Activated CD8-positive, alpha-beta T cell treated with anti-CD3 and anti-CD28 coated beads, Interleukin-2, amount 10 ng/mL, durations not matched to agents 7 days and 5 days (primary cell): ENCODE measurements at regions of chr12 and their contacts with region 1.

Region 1: DNA sequence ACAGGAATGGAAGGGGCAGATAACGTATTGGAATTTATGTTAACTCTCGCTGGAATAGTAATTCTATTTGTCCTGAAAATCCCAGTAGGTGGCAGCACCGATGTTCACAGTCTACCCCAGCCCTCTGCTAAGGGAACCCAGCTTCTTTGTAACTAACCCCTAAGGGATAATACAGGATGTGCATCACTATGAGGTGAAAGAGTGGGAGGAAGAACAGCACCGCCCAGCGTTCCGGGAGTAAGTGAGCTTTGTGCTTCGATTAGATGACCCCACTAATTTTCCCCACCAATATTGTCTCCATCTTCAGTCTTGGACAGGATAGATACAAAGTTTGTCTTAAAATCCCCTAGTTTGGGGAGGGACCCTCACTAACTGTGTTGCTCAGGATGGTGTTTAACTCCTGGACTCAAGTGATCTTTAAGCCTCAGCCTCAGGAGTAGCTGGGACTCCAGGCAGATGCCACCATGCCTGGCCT is 2.7 kb downstream of the SLC2A3 start:
- DNase-seq: peak; percentile 88
- ATAC-seq: peak; percentile 77
- H3K4me3 Mint-ChIP-seq: no peak overlapping the region
- H3K27ac Mint-ChIP-seq: no peak overlapping the region
- H3K4me1 Mint-ChIP-seq: peaks cover 30% of the 10 kb centered on the region
- H3K27me3 Mint-ChIP-seq: no peaks in the 10 kb centered on the region

Region 2: DNA sequence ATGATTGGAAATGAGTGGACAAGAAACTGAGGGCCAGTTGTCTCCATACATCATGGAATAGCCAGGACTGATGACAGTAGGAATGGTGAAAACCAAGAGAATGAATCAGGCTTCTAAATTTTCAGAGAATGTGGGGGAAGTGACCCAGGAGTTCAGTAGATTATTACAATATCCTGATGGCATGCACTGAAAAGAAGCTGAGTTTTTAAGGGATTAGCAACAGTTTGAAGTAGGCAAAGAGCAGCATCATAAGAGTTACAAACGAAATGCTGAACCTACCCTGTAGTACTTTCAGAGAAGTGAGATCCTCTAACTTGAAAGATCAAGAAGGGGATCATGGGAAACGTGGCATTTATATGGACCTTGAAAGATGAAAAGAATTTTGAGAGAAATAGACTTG is 73.7 kb before region 1 on chr12:
- CTCF ChIA-PET with region 1: interaction called, 40 read pairs
- POLR2A ChIA-PET with region 1: interaction called, 4 read pairs
- DNase-seq: no peak
- ATAC-seq: no peak
- H3K4me3 Mint-ChIP-seq: no peak overlapping the region
- H3K27ac Mint-ChIP-seq: no peak overlapping the region
- H3K4me1 Mint-ChIP-seq: peaks cover 20% of the 10 kb centered on the region
- H3K27me3 Mint-ChIP-seq: peaks cover 7% of the 10 kb centered on the region

Region 3: GRCh38 chr12:7959701-7960121 is 26.4 kb after region 1 on chr12:
- CTCF ChIA-PET with region 1: interaction called, 285 read pairs
- POLR2A ChIA-PET with region 1: interaction called, 247 read pairs
- DNase-seq: peak; percentile 78
- ATAC-seq: peak; percentile 72
- H3K4me3 Mint-ChIP-seq: peak overlapping the region; percentile 85
- H3K27ac Mint-ChIP-seq: peak overlapping the region; percentile 91
- H3K4me1 Mint-ChIP-seq: peaks cover 42% of the 10 kb centered on the region
- H3K27me3 Mint-ChIP-seq: no peaks in the 10 kb centered on the region

Region 4: GRCh38 chr12:7989827-7990551 is 56.7 kb after region 1 on chr12:
- CTCF ChIA-PET with region 1: interaction called, 147 read pairs
- POLR2A ChIA-PET with region 1: interaction called, 15 read pairs
- DNase-seq: peak; percentile 83
- ATAC-seq: peak; percentile 90
- H3K4me3 Mint-ChIP-seq: peak overlapping the region; percentile 59
- H3K27ac Mint-ChIP-seq: peak overlapping the region; percentile 89
- H3K4me1 Mint-ChIP-seq: peaks cover 34% of the 10 kb centered on the region
- H3K27me3 Mint-ChIP-seq: no peaks in the 10 kb centered on the region

Region 5: GRCh38 chr12:8026291-8026900 is 93.1 kb after region 1 on chr12:
- CTCF ChIA-PET with region 1: interaction called, 13 read pairs
- POLR2A ChIA-PET with region 1: interaction called, 12 read pairs
- DNase-seq: peak; percentile 99
- ATAC-seq: peak; percentile 96
- H3K4me3 Mint-ChIP-seq: peak overlapping the region; percentile 89
- H3K27ac Mint-ChIP-seq: peak overlapping the region; percentile 99
- H3K4me1 Mint-ChIP-seq: peaks cover 13% of the 10 kb centered on the region
- H3K27me3 Mint-ChIP-seq: peaks cover 4% of the 10 kb centered on the region